MCF 10A (cell line): ENCODE measurements at regions of chr18 and their contacts with region 1.

Region 1: GRCh38 chr18:26764628-26765027 is 100.9 kb downstream of the AQP4 start:
- DNase-seq: peak; percentile 34
- H3K4me3 Mint-ChIP-seq: no peak overlapping the region
- H3K27ac Mint-ChIP-seq: peak overlapping the region; percentile 25
- H3K4me1 Mint-ChIP-seq: peaks cover 26% of the 10 kb centered on the region
- H3K27me3 Mint-ChIP-seq: no peaks in the 10 kb centered on the region
- CTCF ChIP-seq: no peak

Region 2: GRCh38 chr18:26746279-26747150 is 18.1 kb before region 1 on chr18:
- CTCF ChIA-PET with region 1: interaction called, 4 read pairs
- POLR2A ChIA-PET with region 1: interaction called, 25 read pairs
- intact Hi-C with region 1: no loop called
- DNase-seq: peak; percentile 69
- H3K4me3 Mint-ChIP-seq: peak overlapping the region; percentile 40
- H3K27ac Mint-ChIP-seq: peak overlapping the region; percentile 71
- H3K4me1 Mint-ChIP-seq: peaks cover 32% of the 10 kb centered on the region
- H3K27me3 Mint-ChIP-seq: no peaks in the 10 kb centered on the region
- CTCF ChIP-seq: no peak

Region 3: DNA sequence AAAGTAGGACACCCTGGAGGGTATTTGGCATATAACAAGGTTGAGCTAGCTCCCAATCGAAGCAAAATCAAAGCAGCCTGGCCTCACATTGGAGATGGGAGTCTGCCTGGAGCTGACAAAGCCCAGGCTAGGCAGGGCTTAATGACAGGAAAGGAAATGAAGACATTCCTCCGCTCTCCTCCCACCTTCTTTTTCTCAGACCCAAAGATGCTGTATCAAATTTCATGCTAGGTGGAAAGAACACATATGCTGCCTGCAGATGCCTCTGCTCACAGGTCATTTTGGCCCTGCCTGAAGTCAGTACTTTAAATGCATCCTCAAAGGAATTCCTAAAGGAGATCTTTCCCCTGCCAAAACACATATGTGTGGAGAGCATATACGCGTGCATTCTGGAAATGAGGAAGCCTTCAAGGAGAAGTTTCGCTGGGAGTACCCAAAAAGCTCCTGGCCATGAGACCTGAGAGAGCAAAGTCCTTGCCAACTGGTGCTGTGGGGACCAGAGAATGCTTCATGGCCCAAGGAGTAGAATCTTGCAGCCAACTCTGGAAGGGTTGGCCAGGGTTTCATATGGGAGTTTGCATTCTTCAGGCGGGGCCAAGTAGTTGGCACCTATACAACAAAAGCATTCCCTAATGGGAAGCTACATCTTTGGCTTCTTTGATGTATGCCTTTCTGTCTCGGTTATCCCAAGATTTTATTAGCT is 12.9 kb after region 1 on chr18:
- CTCF ChIA-PET with region 1: interaction called, 9 read pairs
- POLR2A ChIA-PET with region 1: interaction called, 10 read pairs
- intact Hi-C with region 1: no loop called
- DNase-seq: peak; percentile 70
- H3K4me3 Mint-ChIP-seq: no peak overlapping the region
- H3K27ac Mint-ChIP-seq: no peak overlapping the region
- H3K4me1 Mint-ChIP-seq: peaks cover 31% of the 10 kb centered on the region
- H3K27me3 Mint-ChIP-seq: peaks cover 7% of the 10 kb centered on the region
- CTCF ChIP-seq: no peak

Region 4: GRCh38 chr18:26792661-26793060 is 28.0 kb after region 1 on chr18:
- CTCF ChIA-PET with region 1: no interaction called
- POLR2A ChIA-PET with region 1: interaction called, 14 read pairs
- intact Hi-C with region 1: no loop called
- DNase-seq: no peak
- H3K4me3 Mint-ChIP-seq: no peak overlapping the region
- H3K27ac Mint-ChIP-seq: no peak overlapping the region
- H3K4me1 Mint-ChIP-seq: peaks cover 8% of the 10 kb centered on the region
- H3K27me3 Mint-ChIP-seq: no peaks in the 10 kb centered on the region
- CTCF ChIP-seq: no peak

Region 5: DNA sequence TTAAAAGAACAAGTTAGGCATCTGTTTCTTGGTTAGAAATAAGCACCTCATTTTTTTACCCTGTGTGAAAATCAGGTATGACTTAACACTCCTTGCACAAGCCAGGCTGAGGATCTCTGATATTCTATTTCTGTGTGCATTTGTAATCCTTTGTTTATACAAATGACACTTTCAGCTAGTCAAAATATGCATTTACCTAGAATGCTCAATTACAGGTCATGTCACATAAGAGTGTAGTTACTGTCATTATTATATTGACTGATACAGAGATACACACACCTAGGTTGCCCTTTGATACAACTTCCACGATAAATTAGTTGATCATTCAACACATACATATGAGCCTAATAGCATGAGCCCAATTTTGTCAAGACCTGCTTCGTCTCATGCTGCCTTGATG is 276.2 kb after region 1 on chr18:
- CTCF ChIA-PET with region 1: no interaction called
- POLR2A ChIA-PET with region 1: no interaction called
- intact Hi-C with region 1: no loop called
- DNase-seq: no peak
- H3K4me3 Mint-ChIP-seq: no peak overlapping the region
- H3K27ac Mint-ChIP-seq: no peak overlapping the region
- H3K4me1 Mint-ChIP-seq: no peaks in the 10 kb centered on the region
- H3K27me3 Mint-ChIP-seq: peaks cover 36% of the 10 kb centered on the region
- CTCF ChIP-seq: no peak